Posterior vena cava (tissue), 2 donors: ENCODE measurements at regions of chr5 and their contacts with region 1.

Region 1: DNA sequence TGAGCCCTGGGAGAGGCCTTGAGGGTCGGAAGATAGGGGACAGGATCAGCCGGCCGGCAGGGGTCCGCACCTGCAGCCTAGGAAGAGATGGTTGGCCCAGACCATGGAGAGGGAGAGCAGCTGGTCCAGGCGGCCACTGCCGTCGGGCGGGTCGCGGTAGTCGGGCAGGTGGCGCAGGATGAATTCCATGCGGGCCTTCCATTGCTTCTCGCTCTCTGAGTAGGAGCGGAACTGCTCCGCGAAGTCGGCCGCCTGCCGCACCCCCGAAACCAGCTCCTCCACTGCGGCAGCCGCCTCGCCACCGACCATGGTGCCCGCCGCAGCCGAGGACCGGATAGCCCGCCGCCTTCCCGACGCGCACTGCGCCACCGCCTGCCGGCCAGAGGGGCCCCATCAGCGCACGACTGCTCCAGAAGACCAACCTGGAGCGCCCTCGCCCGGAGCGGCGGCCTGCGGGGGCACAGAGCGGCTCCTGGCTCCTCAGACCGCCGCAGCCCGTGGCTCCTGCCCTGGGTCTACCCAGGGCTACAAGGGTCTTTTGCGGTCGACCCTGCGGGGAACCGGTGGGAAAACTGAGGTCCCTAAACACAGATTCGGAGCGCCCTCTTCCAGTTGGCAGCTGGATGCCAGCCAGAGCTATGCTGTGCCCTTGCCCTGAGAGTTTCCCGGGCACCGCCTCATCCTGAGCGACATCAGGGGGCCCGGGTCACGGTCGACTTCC is at the start of gene CDKN2AIPNL:
- DNase-seq: peak; percentile 98
- total RNA-seq, gene CDKN2AIPNL: 18.8 to 19.4 TPM

Region 2: DNA sequence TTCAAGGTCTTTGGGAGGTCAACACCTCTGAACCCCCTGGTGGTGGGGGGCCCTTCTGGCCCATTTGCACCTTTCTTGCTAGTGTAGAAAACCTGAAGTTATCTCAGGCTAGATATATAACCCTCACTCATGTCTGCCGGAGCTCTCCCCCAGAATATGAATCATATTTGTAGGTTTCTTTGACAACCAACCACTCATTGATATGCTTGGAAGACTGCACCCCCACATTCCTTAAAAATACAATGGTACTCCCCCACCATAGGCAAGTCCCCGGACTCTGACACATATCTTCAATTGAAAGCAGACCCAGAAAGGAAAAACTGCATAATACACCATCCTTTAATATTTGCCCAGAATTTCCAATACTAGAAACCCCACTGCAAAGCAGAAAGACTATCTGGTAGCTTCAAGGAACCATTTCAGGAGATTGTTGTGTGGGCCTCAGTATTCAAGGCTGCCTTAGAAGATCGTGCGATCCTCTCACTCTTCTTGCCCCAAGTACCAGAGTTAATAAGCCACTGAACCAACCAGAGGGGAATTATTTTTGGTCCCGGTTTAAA is 41.3 kb before region 1 on chr5:
- intact Hi-C with region 1: no loop called
- DNase-seq: no peak

Region 3: DNA sequence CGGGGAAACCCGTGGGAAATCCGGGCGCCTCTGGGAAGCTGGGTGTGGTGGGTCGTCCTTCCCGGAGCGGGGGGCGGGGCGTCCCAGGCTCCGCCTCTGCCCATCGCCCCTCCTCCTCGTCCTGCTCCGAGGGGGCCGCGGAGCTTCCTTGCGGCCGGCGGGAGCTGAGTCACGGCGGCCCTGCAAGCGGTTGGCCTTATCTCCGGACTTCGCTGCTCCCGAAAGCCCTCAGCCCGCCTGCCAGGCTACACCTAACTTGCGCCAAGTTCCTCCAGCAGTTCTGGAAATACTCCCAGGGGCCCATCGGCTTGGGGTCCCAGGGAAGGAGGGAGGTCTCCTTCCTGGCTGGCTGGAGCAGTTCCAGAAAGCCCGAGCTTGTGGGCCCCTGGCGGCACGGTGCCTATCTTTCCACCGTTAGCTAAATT is 54.1 kb after region 1 on chr5:
- intact Hi-C with region 1: loop called in 1 of 2 experiments (anchors 5 kb)
- DNase-seq: peak; percentile 97

Region 4: GRCh38 chr5:134527146-134527960 is 115.6 kb after region 1 on chr5:
- intact Hi-C with region 1: loop called (anchors 5 to 10 kb)
- DNase-seq: peak; percentile 95

Region 5: DNA sequence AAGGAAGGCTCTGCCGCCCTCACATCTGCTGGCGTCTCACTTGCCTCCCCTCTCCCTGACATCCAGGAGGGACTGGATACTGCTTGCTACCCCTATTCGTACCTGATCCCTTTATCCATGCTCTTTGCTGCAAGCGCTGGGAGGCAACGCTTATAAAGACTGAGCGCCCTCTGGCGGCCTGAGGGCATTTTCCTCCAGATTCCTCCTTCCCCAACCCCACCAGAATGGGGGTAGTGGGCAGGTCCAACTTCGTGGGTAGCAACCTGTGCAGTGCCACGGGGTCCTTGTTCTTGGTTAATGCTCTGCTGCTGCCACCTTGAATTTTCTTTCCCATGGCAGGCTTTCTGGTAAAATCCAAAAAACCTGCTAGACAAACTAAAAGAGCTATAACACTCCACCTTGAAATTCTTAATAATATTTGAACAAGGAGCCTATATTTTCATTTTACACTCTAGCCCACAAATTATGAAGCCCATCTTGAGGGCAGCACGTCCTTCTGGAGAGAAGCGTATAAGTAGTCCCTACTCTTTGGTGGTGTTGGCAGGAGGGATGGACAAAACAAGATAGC is 166.2 kb after region 1 on chr5:
- intact Hi-C with region 1: loop called (anchors 5 kb)
- DNase-seq: peak; percentile 93